ENCODE measurements at regions of chr6 and their contacts with region 1.

Region 1: DNA sequence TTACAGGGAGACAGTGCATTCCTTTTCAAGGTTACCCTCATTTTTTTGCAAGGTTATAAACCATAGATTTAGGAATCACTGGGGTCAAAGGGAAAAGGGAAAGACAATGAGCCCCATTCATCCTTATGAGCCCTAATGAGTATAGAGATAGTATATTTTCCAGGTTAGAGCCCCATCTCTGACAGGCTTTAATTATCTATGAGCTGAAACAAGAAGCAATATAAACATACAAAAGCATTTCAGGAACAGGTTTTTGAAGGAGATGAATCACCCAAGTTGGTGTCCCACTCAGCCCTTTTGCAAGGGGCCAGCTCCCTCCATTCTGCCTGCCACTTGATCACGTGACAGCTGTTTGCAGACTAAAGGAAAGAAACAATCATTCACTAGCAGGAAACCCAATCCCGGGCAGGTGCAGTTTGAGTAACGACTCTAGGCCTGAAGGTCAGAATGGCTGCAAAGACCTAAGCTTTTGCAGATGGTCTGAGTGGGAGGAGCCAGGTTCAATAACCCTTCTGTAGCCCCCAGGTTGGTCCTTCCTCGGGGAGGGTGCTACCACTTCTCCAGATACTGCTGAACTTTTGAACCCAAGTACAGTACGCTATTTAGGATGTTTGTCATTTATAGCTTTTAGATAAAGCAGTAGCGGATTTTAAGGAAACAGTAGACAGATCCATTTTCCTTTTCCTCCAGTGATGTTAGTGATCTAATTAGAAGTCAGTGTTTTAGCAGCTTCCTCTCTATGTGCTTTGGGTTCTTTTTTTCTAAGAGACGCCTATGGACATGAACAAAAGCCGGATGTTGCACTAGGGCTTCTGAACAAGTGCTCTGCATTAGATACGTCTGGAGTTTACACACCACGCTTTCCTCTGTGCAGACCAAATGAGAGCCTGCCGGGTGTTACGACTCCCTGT is 253.2 kb downstream of the SOX4 start:
- DNase-seq: peak; percentile 96
- H3K4me3 ChIP-seq: peak overlapping the region in 1 of 3 experiments; percentile 27
- H3K27ac ChIP-seq: peak overlapping the region; percentile 98
- H3K4me1 ChIP-seq: peaks cover 54% of the 10 kb centered on the region
- H3K27me3 ChIP-seq: no peaks in the 10 kb centered on the region
- CTCF ChIP-seq: no peak
- POLR2A ChIP-seq: peak; percentile 30

Region 2: GRCh38 chr6:21615504-21615903 is 231.3 kb before region 1 on chr6:
- CTCF ChIA-PET with region 1: no interaction called
- POLR2A ChIA-PET with region 1: no interaction called
- dilution Hi-C with region 1: no loop called
- intact Hi-C with region 1: loop called (anchors 5 kb)
- DNase-seq: peak; percentile 89
- H3K4me3 ChIP-seq: no peak overlapping the region
- H3K27ac ChIP-seq: peak overlapping the region; percentile 87
- H3K4me1 ChIP-seq: peaks cover 20% of the 10 kb centered on the region
- H3K27me3 ChIP-seq: no peaks in the 10 kb centered on the region
- CTCF ChIP-seq: no peak
- POLR2A ChIP-seq: no peak

Region 3: GRCh38 chr6:21870076-21870730 is 23.4 kb after region 1 on chr6:
- CTCF ChIA-PET with region 1: no interaction called
- POLR2A ChIA-PET with region 1: interaction called, 16 read pairs
- dilution Hi-C with region 1: no loop called
- intact Hi-C with region 1: no loop called
- DNase-seq: no peak
- H3K4me3 ChIP-seq: no peak overlapping the region
- H3K27ac ChIP-seq: no peak overlapping the region
- H3K4me1 ChIP-seq: no peaks in the 10 kb centered on the region
- H3K27me3 ChIP-seq: no peaks in the 10 kb centered on the region
- CTCF ChIP-seq: no peak
- POLR2A ChIP-seq: no peak

Region 4: GRCh38 chr6:21987501-21987957 is 140.7 kb after region 1 on chr6:
- CTCF ChIA-PET with region 1: no interaction called
- POLR2A ChIA-PET with region 1: no interaction called
- dilution Hi-C with region 1: no loop called
- intact Hi-C with region 1: loop called (anchors 2 kb)
- DNase-seq: peak; percentile 96
- H3K4me3 ChIP-seq: peak overlapping the region in 1 of 3 experiments; percentile 26
- H3K27ac ChIP-seq: peak overlapping the region; percentile 88
- H3K4me1 ChIP-seq: peaks cover 33% of the 10 kb centered on the region
- H3K27me3 ChIP-seq: no peaks in the 10 kb centered on the region
- CTCF ChIP-seq: no peak
- POLR2A ChIP-seq: peak; percentile 21

Region 5: DNA sequence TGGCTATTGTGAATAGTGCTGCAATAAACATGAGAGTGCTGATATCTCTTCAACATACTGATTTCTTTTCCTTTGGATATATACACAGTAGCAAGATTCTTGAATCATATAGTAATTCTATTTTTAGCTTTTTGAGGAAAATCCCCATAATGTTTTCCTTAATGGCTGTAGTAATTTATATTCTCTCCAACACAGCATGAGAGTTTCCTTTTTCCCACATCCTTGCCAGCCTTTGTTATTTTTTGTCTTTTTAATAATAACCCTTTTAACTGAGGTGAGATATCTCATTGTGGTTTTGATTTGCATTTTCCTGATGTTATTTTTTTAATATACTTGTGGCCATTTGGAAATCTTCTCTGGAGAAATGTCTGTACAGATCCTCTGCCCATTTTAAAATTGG is 317.4 kb after region 1 on chr6:
- CTCF ChIA-PET with region 1: no interaction called
- POLR2A ChIA-PET with region 1: no interaction called
- dilution Hi-C with region 1: no loop called
- intact Hi-C with region 1: no loop called
- DNase-seq: peak; percentile 82
- H3K4me3 ChIP-seq: no peak overlapping the region
- H3K27ac ChIP-seq: no peak overlapping the region
- H3K4me1 ChIP-seq: peaks cover 4% of the 10 kb centered on the region
- H3K27me3 ChIP-seq: no peaks in the 10 kb centered on the region
- CTCF ChIP-seq: no peak
- POLR2A ChIP-seq: no peak

Region 6: DNA sequence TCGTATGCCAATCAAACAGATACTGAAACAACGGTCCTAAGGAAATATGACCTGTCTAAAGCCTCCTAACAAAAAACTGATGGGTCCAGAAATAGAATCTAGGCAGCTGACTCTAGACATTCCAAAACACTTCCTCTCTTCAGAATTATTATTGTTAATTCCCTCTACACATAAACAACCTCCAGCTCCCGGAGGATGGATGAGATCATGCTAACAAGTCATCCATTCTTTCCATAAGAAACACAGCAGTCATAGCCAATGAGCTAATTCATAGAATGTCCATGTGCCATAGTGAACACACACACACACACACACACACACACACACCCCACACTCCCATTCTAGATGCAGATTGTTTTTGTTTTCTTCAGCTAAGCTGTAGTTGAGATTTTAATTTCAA is 766.9 kb after region 1 on chr6:
- CTCF ChIA-PET with region 1: no interaction called
- POLR2A ChIA-PET with region 1: no interaction called
- dilution Hi-C with region 1: no loop called
- intact Hi-C with region 1: loop called (anchors 2 kb)
- DNase-seq: peak; percentile 96
- H3K4me3 ChIP-seq: no peak overlapping the region
- H3K27ac ChIP-seq: peak overlapping the region; percentile 53
- H3K4me1 ChIP-seq: peaks cover 12% of the 10 kb centered on the region
- H3K27me3 ChIP-seq: no peaks in the 10 kb centered on the region
- CTCF ChIP-seq: no peak
- POLR2A ChIP-seq: no peak

Measured in endothelial cell of umbilical vein (primary cell).